CD4-positive, alpha-beta memory T cell (primary cell): ENCODE measurements at regions of chr6 and their contacts with region 1.

Region 1: GRCh38 chr6:109690737-109691621 is at the starts of genes AK9 and FIG4:
- DNase-seq: peak; percentile 82 to 90 (median 84)
- H3K4me3 ChIP-seq: peak within 1 kb of the TSS; percentile 87 to 89
- H3K4me3 Mint-ChIP-seq: peak within 1 kb of the TSS; percentile 95 to 100 (median 99)
- H3K27ac ChIP-seq: peak within 1 kb of the TSS; percentile 74
- H3K27ac Mint-ChIP-seq: peak within 1 kb of the TSS; percentile 93 to 99 (median 97)
- H3K4me1 ChIP-seq: peaks cover 26% of the 10 kb centered on the region
- H3K4me1 Mint-ChIP-seq: peaks cover 10 to 29% (median 22%) of the 10 kb centered on the region in 4 donors
- H3K27me3 ChIP-seq: no peaks in the 10 kb centered on the region
- H3K27me3 Mint-ChIP-seq: peaks cover 0 to 2% of the 10 kb centered on the region in 2 donors
- total RNA-seq, gene AK9: 15.6 to 18.4 TPM
- total RNA-seq, gene FIG4: 14.4 to 14.8 TPM

Region 2: DNA sequence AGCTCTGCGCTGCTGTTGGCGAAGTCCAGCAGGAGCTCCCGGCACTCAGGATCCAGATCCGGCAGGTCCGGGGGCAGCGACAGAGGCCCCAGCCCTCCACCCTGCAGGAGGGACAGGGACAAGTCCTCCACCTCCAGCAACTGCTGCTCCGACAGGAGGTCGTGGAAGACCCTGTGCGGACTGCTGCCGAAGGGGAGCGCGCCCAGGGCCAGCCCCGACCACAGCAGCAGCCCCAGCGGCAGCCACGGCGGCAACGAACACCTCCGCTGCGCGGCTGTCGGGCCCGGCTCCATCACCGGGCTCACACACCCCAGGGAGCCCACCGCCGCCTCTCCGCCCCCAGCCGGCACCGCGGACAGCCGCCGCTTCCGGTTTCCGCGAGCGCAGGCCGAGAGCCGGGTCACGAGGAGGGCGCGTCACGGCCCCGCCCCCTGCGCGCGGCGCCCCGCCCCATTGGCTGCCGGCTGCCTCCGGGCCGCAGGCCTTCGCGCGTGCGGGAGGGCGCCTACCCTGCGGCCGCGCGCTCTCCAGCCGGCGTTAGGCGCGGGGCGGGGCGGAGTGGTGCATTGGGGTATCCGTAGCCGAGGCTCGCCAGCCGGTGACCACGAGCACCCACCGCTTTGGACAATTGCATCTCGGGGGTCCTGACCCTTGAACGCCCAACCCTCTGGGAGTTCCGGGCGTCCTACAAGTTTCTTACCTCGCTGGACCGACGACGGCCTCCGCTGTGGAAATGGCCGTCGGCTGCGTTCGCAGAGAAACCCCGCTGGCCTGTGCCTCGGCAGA is 1616.4 kb before region 1 on chr6 and contains the start of gene OSTM1:
- CTCF ChIA-PET with region 1: no interaction called
- POLR2A ChIA-PET with region 1: no interaction called
- intact Hi-C with region 1: loop called (anchors 10 kb)
- DNase-seq: peak; percentile 88 to 93 (median 93)
- H3K4me3 ChIP-seq: peak within 1 kb of the TSS; percentile 66 to 100
- H3K4me3 Mint-ChIP-seq: peak within 1 kb of the TSS; percentile 87 to 95 (median 90)
- H3K27ac ChIP-seq: peak within 1 kb of the TSS; percentile 78
- H3K27ac Mint-ChIP-seq: peak within 1 kb of the TSS; percentile 90 to 96 (median 94)
- H3K4me1 ChIP-seq: peaks cover 24% of the 10 kb centered on the region
- H3K4me1 Mint-ChIP-seq: peaks cover 18 to 32% (median 20%) of the 10 kb centered on the region in 4 donors
- H3K27me3 ChIP-seq: no peaks in the 10 kb centered on the region
- H3K27me3 Mint-ChIP-seq: peaks cover 0 to 5% of the 10 kb centered on the region in 2 donors
- total RNA-seq, gene OSTM1: 54.4 to 55.6 TPM

Region 3: DNA sequence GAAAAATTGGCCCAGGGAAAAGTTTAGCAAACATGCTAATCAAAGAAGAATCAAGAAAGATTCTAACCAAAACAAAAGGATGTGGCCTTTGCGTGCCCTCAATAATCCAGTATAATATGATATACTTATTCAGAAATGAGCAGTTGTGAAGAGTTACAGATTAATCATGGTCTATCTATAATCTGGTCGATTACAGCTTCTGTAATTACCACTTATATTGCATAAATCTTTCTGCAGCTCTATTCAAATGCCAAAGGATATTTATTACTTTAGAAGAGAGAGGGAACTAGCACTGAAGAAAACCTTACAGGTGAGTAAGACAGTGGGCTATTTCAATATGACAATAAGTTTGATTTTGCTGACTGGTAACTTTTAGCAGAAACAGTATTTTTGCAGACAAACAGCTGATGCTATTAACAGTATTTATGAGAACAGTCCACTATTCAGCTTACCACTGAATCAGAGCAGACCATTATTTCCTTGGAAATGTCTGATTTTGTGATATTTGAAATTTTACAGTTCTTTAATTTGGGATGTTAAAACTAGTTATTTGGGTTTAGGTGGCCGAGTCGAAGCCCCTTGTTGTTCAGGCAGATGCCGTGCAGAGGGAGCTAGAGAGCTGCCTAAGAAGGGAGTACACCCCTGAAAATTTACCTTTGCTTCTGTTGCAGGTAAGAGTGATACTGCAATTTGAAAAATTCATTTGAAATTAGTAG is 503.4 kb before region 1 on chr6:
- CTCF ChIA-PET with region 1: interaction called, 5 read pairs
- POLR2A ChIA-PET with region 1: no interaction called
- intact Hi-C with region 1: loop called (anchors 2 kb)
- DNase-seq: peak; percentile 52 to 62 (median 59)
- H3K4me3 ChIP-seq: no peak overlapping the region
- H3K4me3 Mint-ChIP-seq: no peak overlapping the region
- H3K27ac ChIP-seq: no peak overlapping the region
- H3K27ac Mint-ChIP-seq: no peak overlapping the region
- H3K4me1 ChIP-seq: no peaks in the 10 kb centered on the region
- H3K4me1 Mint-ChIP-seq: peaks cover 0 to 5% (median 0%) of the 10 kb centered on the region in 4 donors
- H3K27me3 ChIP-seq: peaks cover 6% of the 10 kb centered on the region
- H3K27me3 Mint-ChIP-seq: peaks cover 3 to 10% of the 10 kb centered on the region in 2 donors

Region 4: DNA sequence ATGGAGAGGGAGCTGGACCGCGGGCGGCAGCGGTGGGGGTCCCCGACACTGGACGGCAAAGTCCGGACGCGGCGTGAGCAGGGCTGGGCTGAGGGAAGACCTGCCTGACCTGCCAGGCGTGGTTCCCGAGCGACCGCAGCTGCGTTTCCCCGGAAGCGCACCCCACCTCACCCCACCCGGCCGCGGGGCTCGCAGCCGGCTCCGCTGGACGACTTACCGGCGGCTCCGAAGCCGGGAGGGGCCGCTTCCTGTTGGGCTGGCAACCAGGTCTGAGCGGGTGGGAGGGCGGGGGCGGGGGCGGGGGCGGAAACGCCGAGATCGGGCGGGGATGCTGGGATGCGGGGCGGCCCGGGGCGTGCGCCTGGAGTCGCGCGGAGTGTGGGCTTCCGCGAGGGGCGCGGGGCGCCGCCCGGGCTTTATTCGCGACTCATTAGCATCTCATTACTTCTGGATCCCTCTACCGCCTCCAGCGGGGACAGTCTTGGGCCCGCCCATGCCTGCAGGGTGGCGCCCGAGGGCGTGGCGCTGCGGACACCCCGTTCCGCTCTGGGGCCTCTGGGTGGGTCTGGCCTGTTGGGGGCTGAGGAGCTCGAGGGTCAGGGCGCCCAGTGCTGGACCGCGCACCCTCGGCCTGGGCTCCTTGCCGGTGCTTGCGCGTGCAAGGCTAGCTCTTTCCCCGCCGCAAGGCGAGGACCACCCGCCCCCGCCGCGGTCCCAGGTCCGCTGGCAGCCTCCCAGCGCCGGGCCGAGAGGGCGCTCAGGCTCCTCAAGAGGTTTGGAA is 235.3 kb before region 1 on chr6 and contains the start of gene MICAL1:
- CTCF ChIA-PET with region 1: no interaction called
- POLR2A ChIA-PET with region 1: interaction called, 8 read pairs
- intact Hi-C with region 1: loop called (anchors 1 kb)
- DNase-seq: peak; percentile 78 to 90 (median 81)
- H3K4me3 ChIP-seq: peak within 1 kb of the TSS; percentile 76 to 91
- H3K4me3 Mint-ChIP-seq: peak within 1 kb of the TSS; percentile 87 to 99 (median 98)
- H3K27ac ChIP-seq: peak within 1 kb of the TSS; percentile 94
- H3K27ac Mint-ChIP-seq: peak within 1 kb of the TSS; percentile 95 to 100 (median 99)
- H3K4me1 ChIP-seq: peaks cover 75% of the 10 kb centered on the region
- H3K4me1 Mint-ChIP-seq: peaks cover 39 to 76% (median 59%) of the 10 kb centered on the region in 4 donors
- H3K27me3 ChIP-seq: no peaks in the 10 kb centered on the region
- H3K27me3 Mint-ChIP-seq: no peaks in the 10 kb centered on the region
- total RNA-seq, gene MICAL1: 76.5 to 79.3 TPM

Region 5: GRCh38 chr6:109595998-109596397 is 95.0 kb before region 1 on chr6:
- CTCF ChIA-PET with region 1: no interaction called
- POLR2A ChIA-PET with region 1: no interaction called
- intact Hi-C with region 1: loop called (anchors 10 kb)
- DNase-seq: peak in 1 of 5 donors; percentile 5
- H3K4me3 ChIP-seq: no peak overlapping the region
- H3K4me3 Mint-ChIP-seq: no peak overlapping the region
- H3K27ac ChIP-seq: no peak overlapping the region
- H3K27ac Mint-ChIP-seq: no peak overlapping the region
- H3K4me1 ChIP-seq: peaks cover under 1% of the 10 kb centered on the region
- H3K4me1 Mint-ChIP-seq: peaks cover under 1 to 4% (median 1%) of the 10 kb centered on the region in 4 donors
- H3K27me3 ChIP-seq: no peaks in the 10 kb centered on the region
- H3K27me3 Mint-ChIP-seq: no peaks in the 10 kb centered on the region